CD4-positive, alpha-beta memory T cell (primary cell): ENCODE measurements at regions of chr15 and their contacts with region 1.

Region 1: DNA sequence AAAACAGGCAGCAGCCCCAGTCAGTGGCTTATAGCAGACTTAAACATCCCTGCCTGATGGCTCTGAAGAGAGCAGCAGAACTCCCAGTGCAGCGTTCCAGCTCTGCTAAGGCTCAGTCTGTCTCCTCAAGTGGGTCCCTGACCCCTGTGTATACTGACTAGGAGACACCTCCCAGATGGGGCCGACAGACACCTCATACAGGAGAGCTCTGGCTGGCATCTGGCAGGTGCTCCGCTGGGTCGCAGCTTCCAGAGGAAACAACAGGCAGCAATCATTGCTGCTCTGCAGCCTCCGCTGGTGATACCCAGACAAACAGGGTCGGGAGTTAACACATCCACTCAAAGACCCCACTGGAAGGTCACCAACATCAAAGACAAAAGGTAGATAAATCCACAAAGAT is 93.5 kb downstream of the RFX7 start:
- DNase-seq: no peak
- H3K4me3 ChIP-seq: no peak overlapping the region
- H3K4me3 Mint-ChIP-seq: no peak overlapping the region
- H3K27ac ChIP-seq: no peak overlapping the region
- H3K27ac Mint-ChIP-seq: no peak overlapping the region
- H3K4me1 ChIP-seq: no peaks in the 10 kb centered on the region
- H3K4me1 Mint-ChIP-seq: peaks cover 36 to 64% (median 54%) of the 10 kb centered on the region in 4 donors
- H3K27me3 ChIP-seq: no peaks in the 10 kb centered on the region
- H3K27me3 Mint-ChIP-seq: no peaks in the 10 kb centered on the region

Region 2: GRCh38 chr15:56160966-56161365 is 10.8 kb after region 1 on chr15:
- CTCF ChIA-PET with region 1: no interaction called
- POLR2A ChIA-PET with region 1: no interaction called
- intact Hi-C with region 1: no loop called
- DNase-seq: no peak
- H3K4me3 ChIP-seq: no peak overlapping the region
- H3K4me3 Mint-ChIP-seq: no peak overlapping the region
- H3K27ac ChIP-seq: no peak overlapping the region
- H3K27ac Mint-ChIP-seq: peak overlapping the region in 2 of 7 donors; percentile 38 to 75
- H3K4me1 ChIP-seq: peaks cover 15% of the 10 kb centered on the region
- H3K4me1 Mint-ChIP-seq: peaks cover 28 to 47% (median 36%) of the 10 kb centered on the region in 4 donors
- H3K27me3 ChIP-seq: no peaks in the 10 kb centered on the region
- H3K27me3 Mint-ChIP-seq: no peaks in the 10 kb centered on the region

Region 3: GRCh38 chr15:56185980-56186379 is 35.8 kb after region 1 on chr15:
- CTCF ChIA-PET with region 1: no interaction called
- POLR2A ChIA-PET with region 1: no interaction called
- intact Hi-C with region 1: loop called (anchors 5 kb)
- DNase-seq: no peak
- H3K4me3 ChIP-seq: no peak overlapping the region
- H3K4me3 Mint-ChIP-seq: peak overlapping the region in 1 of 8 donors; percentile 32
- H3K27ac ChIP-seq: no peak overlapping the region
- H3K27ac Mint-ChIP-seq: peak overlapping the region in 3 of 7 donors; percentile 20 to 57 (median 30)
- H3K4me1 ChIP-seq: peaks cover 20% of the 10 kb centered on the region
- H3K4me1 Mint-ChIP-seq: peaks cover 36 to 56% (median 46%) of the 10 kb centered on the region in 4 donors
- H3K27me3 ChIP-seq: no peaks in the 10 kb centered on the region
- H3K27me3 Mint-ChIP-seq: no peaks in the 10 kb centered on the region